ENCODE measurements at regions of chr3 and their contacts with region 1.

Region 1: DNA sequence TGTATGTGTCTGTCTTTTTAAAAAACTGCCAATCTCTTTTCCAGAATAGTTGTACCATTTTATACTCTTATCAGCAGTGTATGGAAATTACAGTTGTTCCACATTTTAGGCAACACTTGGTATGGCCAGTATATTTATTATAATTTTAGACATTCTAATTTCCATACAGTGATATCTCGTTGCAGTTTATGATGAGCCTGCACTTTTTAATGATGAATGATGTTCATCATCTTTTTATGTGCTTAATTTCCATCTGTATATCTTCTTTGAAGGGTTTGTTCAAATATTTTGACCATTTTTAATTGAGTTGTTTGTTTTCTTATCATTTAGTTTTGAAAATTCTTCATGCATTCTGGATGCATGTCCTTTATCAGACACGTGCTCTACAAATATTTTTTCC is 57.0 kb upstream of the UBE2E2 start:
- DNase-seq: no peak
- H3K4me3 ChIP-seq: no peak overlapping the region
- H3K27ac ChIP-seq: no peak overlapping the region
- H3K4me1 ChIP-seq: no peaks in the 10 kb centered on the region
- CTCF ChIP-seq: no peak

Region 2: DNA sequence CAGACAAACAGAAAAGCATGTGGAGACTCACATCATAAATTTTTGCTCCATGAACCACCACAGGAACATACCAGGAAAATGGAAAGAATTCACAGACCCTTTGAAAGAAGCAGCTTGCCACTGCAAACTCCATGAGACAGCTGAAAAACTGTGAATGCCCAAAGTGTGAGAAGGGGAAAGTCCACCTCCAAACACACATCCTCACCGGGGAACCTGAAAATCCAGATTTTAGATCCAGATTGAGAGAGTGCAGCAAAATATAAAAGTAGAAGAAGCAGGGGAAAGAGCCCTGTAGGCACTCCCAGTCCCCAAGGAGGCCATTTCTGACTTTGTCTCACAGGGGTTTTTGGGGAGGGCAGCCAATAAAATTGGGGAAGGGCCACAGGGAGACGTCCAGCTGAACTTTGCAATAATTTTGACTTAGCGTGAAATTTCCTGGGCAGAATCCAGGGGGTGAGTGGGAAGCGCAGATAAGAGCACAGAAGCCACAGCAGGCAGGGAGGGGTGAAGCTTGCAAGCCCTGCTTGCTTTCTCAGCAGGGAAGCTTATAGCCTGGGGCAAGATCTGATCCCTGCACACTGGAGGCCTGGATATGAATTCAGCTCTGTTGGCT is 126.4 kb before region 1 on chr3:
- CTCF ChIA-PET with region 1: no interaction called
- POLR2A ChIA-PET with region 1: no interaction called
- intact Hi-C with region 1: no loop called
- DNase-seq: no peak
- H3K4me3 ChIP-seq: no peak overlapping the region
- H3K27ac ChIP-seq: no peak overlapping the region
- H3K4me1 ChIP-seq: no peaks in the 10 kb centered on the region
- CTCF ChIP-seq: no peak

Region 3: GRCh38 chr3:23157331-23157730 is 11.2 kb after region 1 on chr3:
- CTCF ChIA-PET with region 1: no interaction called
- POLR2A ChIA-PET with region 1: interaction called, 11 read pairs
- intact Hi-C with region 1: no loop called
- DNase-seq: no peak
- H3K4me3 ChIP-seq: no peak overlapping the region
- H3K27ac ChIP-seq: no peak overlapping the region
- H3K4me1 ChIP-seq: peaks cover 6% of the 10 kb centered on the region
- CTCF ChIP-seq: no peak